Heart right ventricle (tissue), 16 donors: ENCODE measurements at regions of chr12 and their contacts with region 1.

Region 1: DNA sequence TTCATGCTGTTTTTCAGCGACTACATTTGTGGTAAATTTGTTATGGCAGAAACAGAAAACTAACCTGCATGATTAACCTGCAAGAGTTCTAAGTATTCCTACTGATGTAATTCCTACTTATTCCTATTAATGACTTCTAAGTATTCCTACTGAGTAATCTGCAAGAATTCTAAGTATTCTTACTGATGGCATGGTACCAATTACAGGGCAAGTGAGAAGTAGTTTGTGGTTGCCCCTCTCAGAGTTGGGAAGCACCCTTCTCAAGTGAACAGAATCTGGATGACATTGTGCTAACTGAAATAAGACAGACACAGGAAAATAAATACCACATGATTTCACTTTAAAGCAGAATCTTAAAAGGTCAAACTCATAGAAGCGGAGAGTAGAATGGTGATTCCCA is 100.9 kb upstream of the CPNE8 start:
- DNase-seq: no peak
- ATAC-seq: no peak
- H3K4me3 ChIP-seq: no peak overlapping the region
- H3K27ac ChIP-seq: no peak overlapping the region
- H3K4me1 ChIP-seq: no peaks in the 10 kb centered on the region
- H3K27me3 ChIP-seq: no peaks in the 10 kb centered on the region
- CTCF ChIP-seq: no peak

Region 2: DNA sequence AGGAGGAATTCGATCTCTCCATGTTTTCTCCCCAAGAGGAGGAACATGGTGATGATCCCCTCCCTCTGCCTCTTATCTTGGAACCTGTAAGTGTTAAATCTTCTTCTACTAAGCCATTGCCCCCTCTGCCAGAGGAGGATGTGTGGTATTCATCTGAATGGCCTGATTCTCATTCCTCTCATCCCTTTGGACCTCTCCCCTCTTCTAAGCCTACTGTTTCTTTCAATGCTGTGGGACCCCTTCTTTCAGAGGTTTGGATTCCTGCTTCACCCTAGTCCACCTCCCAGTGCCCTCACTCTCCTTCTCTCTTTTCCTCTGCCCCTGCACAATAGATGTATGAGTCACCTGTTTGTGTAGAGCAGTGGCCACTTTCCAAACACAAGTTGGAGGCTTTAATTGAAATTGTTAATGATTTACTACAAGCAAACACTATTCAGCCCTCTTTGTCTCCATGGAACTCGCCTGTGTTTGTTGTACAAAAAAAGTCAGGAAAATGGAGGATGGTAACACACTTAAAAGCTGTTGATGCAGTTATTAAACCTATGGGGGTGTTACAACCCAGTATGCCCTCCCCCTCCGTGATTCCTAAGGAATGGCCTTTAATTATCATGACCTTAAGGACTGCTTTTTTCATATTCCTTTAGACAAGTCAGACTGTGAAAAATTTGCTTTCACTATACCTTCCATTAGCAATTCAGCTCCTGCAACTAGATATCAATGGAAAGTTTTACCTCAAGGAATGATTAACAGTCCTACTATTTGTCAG is 881.9 kb before region 1 on chr12:
- intact Hi-C with region 1: loop called in 1 of 10 experiments (anchors 5 kb)
- DNase-seq: no peak
- ATAC-seq: no peak
- H3K4me3 ChIP-seq: no peak overlapping the region
- H3K27ac ChIP-seq: no peak overlapping the region
- H3K4me1 ChIP-seq: no peaks in the 10 kb centered on the region
- H3K27me3 ChIP-seq: peaks cover 0 to 8% (median 0%) of the 10 kb centered on the region in 7 donors
- CTCF ChIP-seq: no peak

Region 3: DNA sequence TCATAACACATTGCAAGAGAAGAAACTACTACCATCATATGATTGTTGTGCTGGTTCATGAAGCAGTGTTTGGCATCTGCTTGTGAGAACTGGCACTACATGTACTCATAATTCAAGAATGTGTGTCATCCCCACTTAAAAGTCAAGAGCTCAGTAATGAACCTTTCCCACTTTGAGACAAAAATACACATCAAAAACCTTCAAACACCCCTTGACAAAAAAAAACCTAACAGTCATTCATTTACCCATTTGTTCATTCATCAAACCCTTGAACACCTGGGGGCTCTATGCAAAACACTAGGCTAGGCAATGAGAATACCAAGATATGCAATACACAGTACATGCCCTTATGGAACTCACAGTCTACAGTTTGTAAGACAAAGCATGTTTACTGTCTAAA is 396.6 kb after region 1 on chr12:
- intact Hi-C with region 1: no loop called
- DNase-seq: no peak
- ATAC-seq: peak in 4 of 8 donors; percentile 61 to 89 (median 65)
- H3K4me3 ChIP-seq: no peak overlapping the region
- H3K27ac ChIP-seq: peak overlapping the region in 5 of 10 donors; percentile 7 to 72 (median 51)
- H3K4me1 ChIP-seq: peaks cover 0 to 66% (median 22%) of the 10 kb centered on the region in 9 donors
- H3K27me3 ChIP-seq: no peaks in the 10 kb centered on the region
- CTCF ChIP-seq: no peak